HCT116 (cell line): ENCODE measurements at regions of chr16 and their contacts with region 1.

Region 1: DNA sequence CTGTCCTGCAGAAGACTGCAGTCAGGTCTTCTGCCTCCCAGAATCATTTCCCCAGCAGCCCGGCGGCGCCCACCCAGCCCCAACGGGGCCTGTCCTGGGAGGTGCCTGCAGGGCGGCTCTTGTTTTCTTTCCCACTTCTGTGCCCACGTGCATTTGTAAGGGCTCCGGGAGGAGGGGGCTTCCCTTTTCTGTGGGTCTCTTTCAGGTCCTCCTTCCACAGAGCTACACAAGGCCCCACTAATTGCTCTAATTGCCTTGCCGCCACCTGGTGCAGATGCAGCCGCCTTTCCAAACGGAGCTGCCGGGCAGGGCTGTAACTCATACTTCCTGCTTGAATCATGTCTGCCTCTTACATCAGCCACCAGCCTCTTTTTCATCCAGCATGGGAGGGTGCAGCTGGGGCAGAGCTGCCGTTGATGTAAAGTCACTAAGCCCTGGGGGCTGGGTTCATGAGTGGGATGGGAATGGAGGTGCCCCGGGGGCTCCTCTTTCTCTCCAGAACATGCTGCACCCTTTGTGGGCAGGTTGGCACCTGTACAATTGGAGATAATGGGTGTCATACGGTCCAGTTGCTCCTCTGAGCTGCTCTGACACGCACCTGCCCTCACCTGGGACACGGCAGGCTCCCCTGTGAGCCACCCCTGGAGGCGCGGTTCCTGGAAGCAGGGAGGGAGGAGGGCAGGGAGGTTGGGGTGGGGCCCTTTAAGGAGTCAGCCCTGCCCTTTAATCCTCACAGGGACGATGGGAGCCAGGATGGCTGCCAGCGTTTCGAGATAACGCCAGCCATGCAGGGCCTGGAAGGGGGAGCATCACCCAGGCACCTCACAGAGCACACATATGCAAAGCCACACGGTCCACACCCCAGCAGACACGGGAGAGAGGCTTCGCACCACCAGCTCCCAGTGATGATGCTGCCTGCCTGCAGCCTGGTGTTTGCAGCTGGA is 41.1 kb upstream of the KLHDC4 start:
- DNase-seq: peak; percentile 77
- ATAC-seq: peak; percentile 90
- H3K4me3 ChIP-seq: peak overlapping the region; percentile 51 to 66
- H3K27ac ChIP-seq: peak overlapping the region; percentile 71
- H3K4me1 ChIP-seq: peaks cover 21 to 23% of the 10 kb centered on the region in 2 experiments
- H3K27me3 ChIP-seq: no peaks in the 10 kb centered on the region
- CTCF ChIP-seq: no peak
- POLR2A ChIP-seq: no peak
- RAD21 ChIP-seq: no peak

Region 2: GRCh38 chr16:87733190-87733589 is 73.7 kb before region 1 on chr16:
- CTCF ChIA-PET with region 1: no interaction called
- POLR2A ChIA-PET with region 1: no interaction called
- RAD21 ChIA-PET with region 1: no interaction called
- intact Hi-C with region 1: no loop called
- DNase-seq: no peak
- ATAC-seq: no peak
- H3K4me3 ChIP-seq: no peak overlapping the region
- H3K27ac ChIP-seq: no peak overlapping the region
- H3K4me1 ChIP-seq: no peaks in the 10 kb centered on the region
- H3K27me3 ChIP-seq: no peaks in the 10 kb centered on the region
- CTCF ChIP-seq: no peak
- POLR2A ChIP-seq: no peak
- RAD21 ChIP-seq: no peak

Region 3: DNA sequence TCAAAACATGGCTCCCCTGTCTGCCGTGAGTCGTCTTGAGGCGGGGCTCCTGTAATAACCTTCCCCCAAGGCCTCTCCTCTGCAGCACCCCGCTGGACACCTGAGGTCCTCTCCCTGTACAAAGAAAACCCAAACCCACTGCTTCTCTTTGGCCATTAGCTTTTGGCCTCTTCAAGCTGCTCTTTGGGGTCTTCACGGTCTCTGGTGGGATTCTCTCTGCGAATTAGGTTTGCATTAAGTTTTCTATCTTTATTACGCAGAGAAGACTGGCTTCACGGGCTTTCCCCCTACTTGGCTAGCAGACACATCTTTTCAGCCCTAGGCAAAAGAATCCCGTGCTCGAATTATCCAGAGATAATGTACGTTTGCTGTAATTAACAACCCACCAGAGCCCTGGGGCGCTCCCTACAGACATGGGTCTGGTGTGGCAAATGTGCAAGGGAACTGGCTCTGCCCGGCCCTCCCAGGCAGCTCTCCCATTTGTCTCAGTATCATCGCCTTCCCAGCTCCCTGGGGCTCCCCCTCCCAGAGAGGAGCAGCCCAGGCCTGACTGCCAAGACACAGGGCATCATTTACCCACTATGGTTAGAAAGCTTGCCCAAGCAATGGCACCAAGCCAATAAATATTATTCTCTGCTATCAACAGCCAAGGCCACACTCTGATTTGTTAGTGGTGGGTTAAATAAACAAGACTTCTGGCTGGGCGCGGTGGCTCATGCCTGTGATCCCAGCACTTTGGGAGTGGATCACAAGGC is 16.4 kb before region 1 on chr16:
- CTCF ChIA-PET with region 1: interaction called, 3 read pairs
- POLR2A ChIA-PET with region 1: interaction called, 10 read pairs
- RAD21 ChIA-PET with region 1: no interaction called
- intact Hi-C with region 1: no loop called
- DNase-seq: no peak
- ATAC-seq: 0 out of 2 replicates have a peak, but pooled peaks have one; percentile 15
- H3K4me3 ChIP-seq: no peak overlapping the region
- H3K27ac ChIP-seq: no peak overlapping the region
- H3K4me1 ChIP-seq: peaks cover 4 to 16% of the 10 kb centered on the region in 2 experiments; a peak in 3 of 4 replicates
- H3K27me3 ChIP-seq: no peaks in the 10 kb centered on the region
- CTCF ChIP-seq: no peak
- POLR2A ChIP-seq: no peak
- RAD21 ChIP-seq: no peak

Region 4: GRCh38 chr16:87828071-87828971 is 21.4 kb after region 1 on chr16:
- CTCF ChIA-PET with region 1: no interaction called
- POLR2A ChIA-PET with region 1: interaction called, 14 read pairs
- RAD21 ChIA-PET with region 1: no interaction called
- intact Hi-C with region 1: no loop called
- DNase-seq: no peak
- ATAC-seq: peak; percentile 18
- H3K4me3 ChIP-seq: no peak overlapping the region
- H3K27ac ChIP-seq: no peak overlapping the region
- H3K4me1 ChIP-seq: peaks cover 0 to 4% of the 10 kb centered on the region in 2 experiments; a peak in 1 of 4 replicates
- H3K27me3 ChIP-seq: peaks cover 5% of the 10 kb centered on the region; the same call in 1 of the 2 replicates
- CTCF ChIP-seq: no peak
- POLR2A ChIP-seq: no peak
- RAD21 ChIP-seq: no peak